ENCODE measurements at regions of chr4 and their contacts with region 1.

Region 1: DNA sequence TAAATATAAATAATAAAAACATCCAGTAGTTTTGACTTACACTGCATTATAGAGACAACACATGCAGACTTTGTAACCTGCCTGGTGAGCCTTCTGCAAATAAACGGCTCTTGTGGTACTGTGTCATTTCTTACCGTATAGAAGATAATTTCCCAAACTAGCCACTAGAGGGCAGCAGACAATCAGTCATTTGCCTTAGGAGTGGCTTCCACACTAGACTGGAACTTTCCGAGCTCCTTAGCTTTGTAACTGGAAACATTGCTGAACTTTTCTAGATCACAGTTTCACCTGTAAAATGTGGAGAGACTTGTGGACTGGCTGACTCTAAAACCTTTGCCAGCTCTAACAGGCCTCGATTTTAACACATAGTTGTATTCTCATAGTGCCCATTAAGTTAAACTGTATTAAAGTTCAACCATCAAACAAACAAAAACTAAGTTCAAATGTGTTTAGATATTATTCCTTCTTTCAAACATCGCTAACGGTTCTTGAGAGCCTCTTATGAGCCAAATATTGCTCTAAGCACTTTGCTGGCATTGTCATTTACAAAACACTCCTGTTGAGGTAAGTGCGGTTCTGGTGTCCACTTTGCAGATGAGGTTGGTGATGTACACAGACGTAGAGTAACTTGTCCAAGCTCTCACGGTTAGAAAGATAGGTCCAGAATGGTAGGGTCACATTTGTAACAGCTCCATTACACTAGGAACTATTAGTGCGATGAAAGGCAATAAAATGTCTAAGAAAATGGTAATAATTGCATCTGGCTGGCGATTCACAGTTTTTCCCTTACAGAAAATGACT is 345.5 kb downstream of the ANK2 start:
- DNase-seq: peak; percentile 85
- H3K4me3 ChIP-seq: no peak overlapping the region
- CTCF ChIP-seq: peak; percentile 59

Region 2: DNA sequence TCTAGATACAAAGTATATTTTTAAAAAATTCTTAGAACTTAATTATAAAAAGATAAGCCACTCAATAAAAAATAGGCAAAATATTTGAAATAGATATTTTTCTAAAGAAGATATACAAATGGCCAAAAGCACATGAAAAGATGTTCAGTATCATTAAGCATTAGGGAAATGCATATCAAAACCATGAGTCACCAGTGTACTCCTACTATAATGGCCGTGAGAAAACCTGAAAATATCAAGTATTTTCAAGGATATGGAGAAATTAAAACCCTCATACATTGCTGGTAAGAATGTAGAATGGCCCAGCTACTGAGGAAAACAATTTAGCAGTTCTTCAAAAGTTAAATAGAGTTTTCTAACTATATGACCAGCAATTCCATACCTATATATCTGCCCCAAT is 28.7 kb after region 1 on chr4:
- in situ Hi-C with region 1: no loop called
- DNase-seq: no peak
- H3K4me3 ChIP-seq: no peak overlapping the region
- CTCF ChIP-seq: no peak

Region 3: GRCh38 chr4:113756005-113756410 is 361.1 kb after region 1 on chr4:
- in situ Hi-C with region 1: loop called (anchors 10 kb)
- DNase-seq: peak; percentile 84
- H3K4me3 ChIP-seq: no peak overlapping the region
- CTCF ChIP-seq: no peak

Region 4: DNA sequence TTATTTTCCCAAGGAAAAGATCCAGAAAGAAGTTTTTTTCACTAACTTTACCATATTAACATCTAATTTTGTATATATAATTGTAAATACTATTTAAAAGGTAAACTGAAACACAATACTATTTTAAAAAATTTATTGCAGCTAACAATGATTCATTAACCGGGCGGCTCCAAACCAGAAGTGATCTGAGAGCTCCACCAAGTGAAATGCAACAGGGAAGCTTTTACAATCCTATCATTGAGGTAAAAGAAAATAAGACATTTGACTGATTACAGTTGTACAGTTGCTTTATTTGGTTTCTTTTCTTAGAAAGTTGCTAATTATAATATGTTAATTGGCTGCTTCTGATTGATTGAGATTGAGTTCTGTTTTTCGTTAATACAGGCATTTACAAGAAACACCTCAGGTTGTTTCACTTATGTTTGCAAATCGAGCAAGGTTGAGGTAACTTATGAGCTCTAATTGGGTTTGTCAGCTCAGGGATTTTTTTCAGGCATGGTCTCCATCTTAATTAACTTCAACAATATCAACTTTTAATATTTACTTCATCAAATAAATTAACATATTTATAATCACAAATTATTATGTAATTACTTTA is 983.5 kb after region 1 on chr4:
- in situ Hi-C with region 1: loop called (anchors 10 kb)
- DNase-seq: peak; percentile 32
- H3K4me3 ChIP-seq: no peak overlapping the region
- CTCF ChIP-seq: peak; percentile 69